Activated T-helper 2 cell treated with anti-CD3 and anti-CD28 coated beads, Interferon-gamma antibody, Interleukin-2, Interleukin-4, amounts not matched to agents 10 μg/mL and 5 μg/mL and 100 μg/mL, durations not matched to agents 14 hours and 24 hours and 36 hours (primary cell): ENCODE measurements at regions of chr3 and their contacts with region 1.

Region 1: DNA sequence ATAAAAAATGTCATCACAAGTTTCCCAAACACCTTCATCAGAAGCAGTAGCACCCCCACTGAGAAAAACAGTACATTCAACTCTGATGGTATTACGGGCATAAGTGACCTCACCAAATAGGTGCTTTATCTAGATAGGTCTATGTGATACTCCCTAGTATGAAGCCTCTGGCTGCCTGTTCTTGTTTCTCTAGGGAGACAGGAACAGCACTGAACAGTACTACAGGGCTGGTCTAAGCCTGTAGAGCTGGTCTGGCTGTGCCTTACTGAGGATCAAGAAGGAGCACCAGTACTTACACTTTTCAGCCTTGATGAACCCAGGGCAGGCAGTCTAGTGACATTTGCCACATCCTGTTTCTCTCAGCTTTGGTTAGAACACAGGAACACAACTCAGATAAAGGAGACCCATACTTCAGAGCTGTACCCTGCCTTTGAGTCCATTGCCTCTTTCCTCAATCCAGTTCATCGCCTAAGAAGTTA is 35.9 kb downstream of the OXNAD1 start:
- DNase-seq: peak; percentile 58
- H3K4me3 Mint-ChIP-seq: peak overlapping the region; percentile 82
- H3K27ac Mint-ChIP-seq: peak overlapping the region; percentile 94
- H3K4me1 Mint-ChIP-seq: peaks cover 85% of the 10 kb centered on the region
- H3K27me3 Mint-ChIP-seq: no peaks in the 10 kb centered on the region

Region 2: DNA sequence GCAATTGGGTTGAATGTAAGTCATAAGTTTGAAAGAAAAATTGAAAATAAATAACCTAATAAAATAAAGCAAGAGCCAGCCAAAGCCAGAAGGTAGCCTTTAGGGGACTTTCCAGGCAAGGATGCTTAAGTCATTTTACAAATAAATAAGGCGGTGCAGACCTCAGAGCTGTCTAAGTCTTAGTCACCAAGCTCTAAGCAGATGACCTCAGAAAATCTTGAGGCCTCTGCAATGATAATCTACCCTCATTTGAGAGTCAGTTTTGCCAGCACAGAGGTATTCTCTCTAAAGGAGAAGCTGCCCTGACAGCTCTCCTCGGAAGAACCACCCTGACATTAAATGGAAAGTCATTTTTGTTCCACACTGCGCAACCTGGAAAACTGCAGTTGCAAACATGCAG is 78.0 kb after region 1 on chr3:
- intact Hi-C with region 1: loop called (anchors 5 kb)
- DNase-seq: no peak
- H3K4me3 Mint-ChIP-seq: no peak overlapping the region
- H3K27ac Mint-ChIP-seq: peak overlapping the region; percentile 80
- H3K4me1 Mint-ChIP-seq: peaks cover 69% of the 10 kb centered on the region
- H3K27me3 Mint-ChIP-seq: no peaks in the 10 kb centered on the region

Region 3: GRCh38 chr3:16692486-16693378 is 391.8 kb after region 1 on chr3:
- intact Hi-C with region 1: no loop called
- DNase-seq: no peak
- H3K4me3 Mint-ChIP-seq: no peak overlapping the region
- H3K27ac Mint-ChIP-seq: no peak overlapping the region
- H3K4me1 Mint-ChIP-seq: no peaks in the 10 kb centered on the region
- H3K27me3 Mint-ChIP-seq: peaks cover 4% of the 10 kb centered on the region